WTC11 (cell line): ENCODE measurements at regions of chrX and their contacts with region 1.

Region 1: GRCh38 chrX:149512225-149512885 is 7.2 kb upstream of the IDS start:
- DNase-seq: peak; percentile 48
- ATAC-seq: peak; percentile 89
- H3K4me3 Mint-ChIP-seq: no peak overlapping the region
- H3K27ac Mint-ChIP-seq: no peak overlapping the region
- H3K4me1 Mint-ChIP-seq: peaks cover 3% of the 10 kb centered on the region; the same call in 1 of the 2 replicates
- H3K27me3 Mint-ChIP-seq: peaks cover 19% of the 10 kb centered on the region
- CTCF ChIP-seq: 0 out of 2 replicates have a peak, but pooled peaks have one; percentile 23

Region 2: DNA sequence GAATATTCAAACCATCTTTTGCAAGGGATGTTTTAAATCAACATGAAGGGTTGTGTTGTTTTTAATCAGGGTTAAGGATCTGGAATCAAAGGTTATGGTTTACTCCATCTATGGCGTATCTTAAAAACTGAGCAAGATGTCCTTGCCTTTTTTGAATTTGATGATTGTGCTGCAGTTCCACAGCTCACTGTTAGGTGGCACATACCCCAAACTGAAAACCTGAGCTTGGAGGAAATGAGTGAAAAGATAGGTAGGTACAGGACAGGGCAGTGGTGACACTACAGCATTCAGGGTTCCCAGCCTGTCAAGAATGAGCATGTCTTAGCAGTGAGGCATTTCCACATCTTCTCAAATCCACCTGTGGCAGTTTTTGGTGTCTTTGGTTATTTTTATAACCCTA is 15.3 kb after region 1 on chrX:
- CTCF ChIA-PET with region 1: interaction called, 11 read pairs
- POLR2A ChIA-PET with region 1: no interaction called
- DNase-seq: no peak
- ATAC-seq: peak; percentile 49; the same call in 1 of the 2 replicates
- H3K4me3 Mint-ChIP-seq: no peak overlapping the region
- H3K27ac Mint-ChIP-seq: no peak overlapping the region
- H3K4me1 Mint-ChIP-seq: peaks cover 6% of the 10 kb centered on the region; the same call in 1 of the 2 replicates
- H3K27me3 Mint-ChIP-seq: no peaks in the 10 kb centered on the region; the same call in 1 of the 2 replicates
- CTCF ChIP-seq: peak; percentile 18; the same call in 1 of the 2 replicates